ENCODE measurements at regions of chr1 and their contacts with region 1.

Region 1: DNA sequence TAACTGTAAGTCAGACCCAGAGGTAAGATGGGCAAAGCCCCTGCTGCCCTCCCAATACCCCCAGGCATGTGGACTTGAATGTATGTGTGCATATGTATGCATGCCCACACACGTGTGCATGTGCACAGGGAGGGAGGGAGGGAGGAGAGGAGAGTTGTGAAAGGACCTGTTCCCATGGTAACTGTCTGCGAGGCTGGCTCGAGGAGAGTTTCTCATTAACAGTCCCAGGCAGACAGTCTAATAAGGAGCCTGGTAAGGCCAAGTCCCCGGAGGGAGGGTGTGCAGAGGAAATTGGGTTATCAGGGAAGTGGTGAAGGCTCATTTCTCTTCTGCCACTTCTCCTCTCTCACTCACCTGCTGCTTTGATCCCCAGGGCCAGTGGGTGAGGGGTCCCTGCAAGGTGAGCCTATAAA is 74.9 kb downstream of the NFASC start:
- DNase-seq: no peak
- H3K4me3 ChIP-seq: no peak overlapping the region
- CTCF ChIP-seq: no peak
- POLR2A ChIP-seq: no peak

Region 2: DNA sequence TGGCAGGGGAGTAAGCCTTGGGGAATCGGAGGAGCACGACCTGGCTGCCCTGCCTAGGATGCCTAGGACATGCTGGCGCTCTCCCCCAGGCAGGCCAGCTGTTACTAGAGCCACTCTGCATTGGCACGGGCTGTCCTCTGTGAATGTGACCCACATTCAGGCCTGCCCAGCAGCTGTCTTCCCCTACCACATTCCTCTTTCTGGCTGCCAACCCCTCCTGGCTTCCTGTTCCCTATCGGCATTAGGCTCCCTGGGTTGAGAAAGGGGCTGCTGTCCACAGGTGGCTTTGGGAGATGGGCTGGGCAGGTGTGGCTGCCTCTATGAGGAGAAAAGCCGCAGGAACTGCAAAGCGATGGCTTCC is 77.3 kb before region 1 on chr1:
- intact Hi-C with region 1: loop called (anchors 2 kb)
- DNase-seq: peak in 1 of 2 donors; percentile 69
- H3K4me3 ChIP-seq: no peak overlapping the region
- CTCF ChIP-seq: no peak
- POLR2A ChIP-seq: no peak